CD8-positive, alpha-beta memory T cell (primary cell): ENCODE measurements at regions of chr5 and their contacts with region 1.

Region 1: DNA sequence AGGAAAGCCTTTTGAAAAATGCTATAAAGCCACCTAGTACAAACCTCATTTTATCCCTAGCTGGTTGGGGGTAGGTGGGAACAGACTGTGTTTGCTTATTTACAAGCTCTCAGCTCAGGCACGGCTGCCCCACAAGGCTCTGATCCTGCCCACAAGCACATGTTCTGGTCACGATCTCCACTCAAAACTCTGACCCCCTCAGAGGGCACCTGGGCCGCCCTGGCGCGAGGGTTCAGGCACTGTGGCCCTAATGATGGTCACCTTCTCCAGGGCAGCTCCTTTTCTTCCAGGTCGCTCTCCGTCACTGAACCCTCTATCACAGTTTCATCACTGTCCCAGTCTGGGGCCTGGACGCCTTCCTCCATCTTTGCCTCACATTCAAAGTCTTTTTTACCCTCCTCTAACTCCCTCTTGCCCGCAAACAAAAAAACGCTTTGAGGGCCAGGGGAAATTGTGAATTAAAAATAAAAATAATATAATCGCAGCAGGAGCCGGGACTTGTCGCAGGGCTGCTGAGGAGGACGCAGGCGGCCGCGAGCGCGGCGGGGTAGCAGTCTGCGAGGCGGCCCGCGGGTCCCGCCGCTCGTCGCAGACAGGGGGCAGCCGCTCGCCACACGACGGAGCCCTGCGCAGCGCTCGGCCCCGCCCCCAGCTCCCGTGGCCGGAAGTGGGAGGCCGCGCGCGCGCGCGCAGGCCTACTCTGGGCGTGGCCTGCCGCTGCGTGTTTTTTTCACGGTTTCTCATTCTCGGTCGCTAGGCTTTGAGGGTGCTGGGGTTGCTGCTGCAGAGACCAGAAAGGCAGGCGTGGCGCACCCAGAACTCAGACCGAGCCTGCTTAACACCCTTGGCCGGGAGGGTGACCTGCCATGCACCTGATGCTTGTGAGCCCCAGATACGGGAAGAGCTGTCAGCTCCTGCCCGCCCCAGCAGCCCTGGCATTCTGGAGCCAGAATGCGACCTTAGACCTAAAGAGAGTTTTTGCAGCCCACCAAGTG is at the start of gene ANKRD31:
- DNase-seq: peak; percentile 82 to 93 (median 90)
- H3K4me3 ChIP-seq: peak within 1 kb of the TSS; percentile 72
- H3K4me3 Mint-ChIP-seq: peak within 1 kb of the TSS; percentile 84 to 95 (median 95)
- H3K27ac ChIP-seq: peak within 1 kb of the TSS; percentile 66
- H3K27ac Mint-ChIP-seq: peak within 1 kb of the TSS; percentile 76 to 99 (median 97)
- H3K4me1 ChIP-seq: peaks cover 13% of the 10 kb centered on the region
- H3K4me1 Mint-ChIP-seq: peaks cover 10 to 27% (median 23%) of the 10 kb centered on the region in 3 donors
- H3K27me3 ChIP-seq: no peaks in the 10 kb centered on the region
- H3K27me3 Mint-ChIP-seq: peaks cover 0 to 7% of the 10 kb centered on the region in 2 donors
- total RNA-seq, gene ANKRD31: 0.64 to 0.66 TPM

Region 2: GRCh38 chr5:74934949-74935751 is 301.5 kb before region 1 on chr5:
- CTCF ChIA-PET with region 1: interaction called, 15 read pairs
- POLR2A ChIA-PET with region 1: no interaction called
- DNase-seq: peak in 2 of 5 donors; percentile 22 to 46
- H3K4me3 ChIP-seq: peak overlapping the region; percentile 10
- H3K4me3 Mint-ChIP-seq: peak overlapping the region; percentile 21 to 87 (median 72)
- H3K27ac ChIP-seq: no peak overlapping the region
- H3K27ac Mint-ChIP-seq: peak overlapping the region in 7 of 8 donors; percentile 26 to 83 (median 70)
- H3K4me1 ChIP-seq: peaks cover 20% of the 10 kb centered on the region
- H3K4me1 Mint-ChIP-seq: peaks cover 18 to 42% (median 33%) of the 10 kb centered on the region in 3 donors
- H3K27me3 ChIP-seq: no peaks in the 10 kb centered on the region
- H3K27me3 Mint-ChIP-seq: peaks cover 12 to 16% of the 10 kb centered on the region in 2 donors

Region 3: GRCh38 chr5:75053304-75054133 is 183.1 kb before region 1 on chr5:
- CTCF ChIA-PET with region 1: interaction called, 37 read pairs
- POLR2A ChIA-PET with region 1: interaction called, 17 read pairs
- DNase-seq: peak; percentile 14 to 78 (median 60)
- H3K4me3 ChIP-seq: peak overlapping the region; percentile 67
- H3K4me3 Mint-ChIP-seq: peak overlapping the region; percentile 88 to 98 (median 93)
- H3K27ac ChIP-seq: peak overlapping the region; percentile 68
- H3K27ac Mint-ChIP-seq: peak overlapping the region; percentile 88 to 95 (median 94)
- H3K4me1 ChIP-seq: peaks cover 81% of the 10 kb centered on the region
- H3K4me1 Mint-ChIP-seq: peaks cover 66 to 87% (median 86%) of the 10 kb centered on the region in 3 donors
- H3K27me3 ChIP-seq: no peaks in the 10 kb centered on the region
- H3K27me3 Mint-ChIP-seq: peaks cover 0 to 3% of the 10 kb centered on the region in 2 donors

Region 4: GRCh38 chr5:75265731-75266130 is 29.1 kb after region 1 on chr5:
- CTCF ChIA-PET with region 1: interaction called, 10 read pairs
- POLR2A ChIA-PET with region 1: no interaction called
- DNase-seq: peak in 2 of 5 donors; percentile 22 to 54
- H3K4me3 ChIP-seq: no peak overlapping the region
- H3K4me3 Mint-ChIP-seq: no peak overlapping the region
- H3K27ac ChIP-seq: no peak overlapping the region
- H3K27ac Mint-ChIP-seq: peak overlapping the region in 2 of 8 donors; percentile 54 to 71
- H3K4me1 ChIP-seq: no peaks in the 10 kb centered on the region
- H3K4me1 Mint-ChIP-seq: no peaks in the 10 kb centered on the region
- H3K27me3 ChIP-seq: no peaks in the 10 kb centered on the region
- H3K27me3 Mint-ChIP-seq: peaks cover 0 to 16% of the 10 kb centered on the region in 2 donors

Region 5: GRCh38 chr5:75336625-75337339 is 100.2 kb after region 1 on chr5 and contains the start of gene HMGCR:
- CTCF ChIA-PET with region 1: interaction called, 16 read pairs
- POLR2A ChIA-PET with region 1: interaction called, 10 read pairs
- DNase-seq: peak; percentile 94 to 99 (median 97)
- H3K4me3 ChIP-seq: peak within 1 kb of the TSS; percentile 91
- H3K4me3 Mint-ChIP-seq: no peak within 1 kb of the TSS
- H3K27ac ChIP-seq: peak within 1 kb of the TSS; percentile 90
- H3K27ac Mint-ChIP-seq: peak within 1 kb of the TSS in 1 of 8 donors; percentile 96
- H3K4me1 ChIP-seq: peaks cover 19% of the 10 kb centered on the region
- H3K4me1 Mint-ChIP-seq: peaks cover 28 to 41% (median 38%) of the 10 kb centered on the region in 3 donors
- H3K27me3 ChIP-seq: no peaks in the 10 kb centered on the region
- H3K27me3 Mint-ChIP-seq: no peaks in the 10 kb centered on the region
- total RNA-seq, gene HMGCR: 45.9 to 47.7 TPM

Region 6: GRCh38 chr5:75584641-75585040 is 348.0 kb after region 1 on chr5:
- CTCF ChIA-PET with region 1: no interaction called
- POLR2A ChIA-PET with region 1: no interaction called
- DNase-seq: no peak
- H3K4me3 ChIP-seq: no peak overlapping the region
- H3K4me3 Mint-ChIP-seq: no peak overlapping the region
- H3K27ac ChIP-seq: no peak overlapping the region
- H3K27ac Mint-ChIP-seq: peak overlapping the region in 1 of 8 donors; percentile 42
- H3K4me1 ChIP-seq: no peaks in the 10 kb centered on the region
- H3K4me1 Mint-ChIP-seq: peaks cover 0 to 4% (median 3%) of the 10 kb centered on the region in 3 donors
- H3K27me3 ChIP-seq: no peaks in the 10 kb centered on the region
- H3K27me3 Mint-ChIP-seq: no peaks in the 10 kb centered on the region

Region 7: DNA sequence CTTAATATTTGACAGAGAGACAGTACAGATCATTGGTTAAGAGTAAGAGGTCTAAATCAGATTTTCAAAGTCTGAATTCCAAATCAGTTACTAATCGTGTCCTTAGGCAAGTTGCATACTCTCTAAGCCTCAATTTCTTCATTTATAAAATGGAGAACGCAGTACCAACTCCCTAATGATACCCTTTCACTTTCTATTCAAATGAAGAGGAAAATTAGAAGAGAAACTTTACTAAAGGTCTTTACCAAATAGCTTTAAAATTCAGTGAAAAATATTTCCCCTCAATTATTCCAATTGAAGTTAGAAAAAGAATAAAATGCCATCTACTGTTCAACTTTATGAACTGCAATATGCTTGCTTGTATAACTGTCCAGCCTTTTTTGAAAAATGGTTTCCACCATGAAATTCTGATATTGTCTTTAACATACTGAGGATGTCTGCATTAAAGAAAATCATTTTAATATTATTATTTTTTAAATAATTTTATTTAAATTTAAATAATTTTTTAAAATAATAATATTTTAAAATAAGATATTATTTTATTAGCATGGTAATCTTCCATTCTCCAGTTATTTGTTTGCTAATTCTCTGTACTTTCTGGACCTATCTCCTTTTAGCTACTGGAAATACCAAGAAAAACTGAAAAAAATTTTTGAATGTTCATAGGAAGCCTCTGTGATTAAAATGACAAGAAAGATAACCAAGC is 444.7 kb after region 1 on chr5:
- CTCF ChIA-PET with region 1: interaction called, 13 read pairs
- POLR2A ChIA-PET with region 1: interaction called, 4 read pairs
- DNase-seq: peak in 2 of 5 donors; percentile 10 to 20
- H3K4me3 ChIP-seq: no peak overlapping the region
- H3K4me3 Mint-ChIP-seq: no peak overlapping the region
- H3K27ac ChIP-seq: no peak overlapping the region
- H3K27ac Mint-ChIP-seq: no peak overlapping the region
- H3K4me1 ChIP-seq: peaks cover 3% of the 10 kb centered on the region
- H3K4me1 Mint-ChIP-seq: peaks cover 3 to 10% (median 4%) of the 10 kb centered on the region in 3 donors
- H3K27me3 ChIP-seq: no peaks in the 10 kb centered on the region
- H3K27me3 Mint-ChIP-seq: no peaks in the 10 kb centered on the region